ENCODE measurements at regions of chr2 and their contacts with region 1.

Region 1: GRCh38 chr2:106065268-106065982 is 128.7 kb downstream of the UXS1 start:
- DNase-seq: no peak
- H3K4me3 ChIP-seq: peak overlapping the region; percentile 37 to 58 (median 51)
- H3K27ac ChIP-seq: peak overlapping the region in 3 of 4 donors; percentile 20 to 71 (median 57)
- H3K4me1 ChIP-seq: peaks cover 0 to 24% (median 23%) of the 10 kb centered on the region in 4 donors
- H3K27me3 ChIP-seq: no peaks in the 10 kb centered on the region
- CTCF ChIP-seq: no peak
- EP300 ChIP-seq: no peak
- POLR2A ChIP-seq: no peak

Region 2: DNA sequence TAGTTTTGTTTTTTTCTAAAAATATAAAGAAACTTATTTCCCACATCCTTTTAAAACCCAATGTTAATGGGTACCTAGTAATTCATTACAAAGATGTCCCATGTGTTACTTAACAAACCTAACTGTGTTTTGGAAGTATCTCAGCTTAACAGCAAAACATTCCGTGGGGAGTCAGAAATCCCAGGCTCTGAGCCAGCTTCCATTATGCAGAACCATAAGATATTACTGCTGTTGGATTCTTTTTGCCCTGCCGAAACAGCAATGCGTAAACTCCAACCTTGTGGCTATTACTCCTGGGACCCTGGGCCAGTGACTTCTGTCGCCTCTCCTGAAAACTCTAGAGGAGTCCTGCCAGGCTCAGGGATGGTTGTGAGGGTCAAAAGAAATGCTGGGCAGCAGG is 45.4 kb before region 1 on chr2:
- intact Hi-C with region 1: no loop called
- DNase-seq: no peak
- H3K4me3 ChIP-seq: no peak overlapping the region
- H3K27ac ChIP-seq: peak overlapping the region in 3 of 4 donors; percentile 62 to 78 (median 66)
- H3K4me1 ChIP-seq: peaks cover 0 to 27% (median 24%) of the 10 kb centered on the region in 4 donors
- H3K27me3 ChIP-seq: no peaks in the 10 kb centered on the region
- CTCF ChIP-seq: no peak
- EP300 ChIP-seq: no peak
- POLR2A ChIP-seq: no peak

Region 3: GRCh38 chr2:106030287-106031268 is 34.8 kb before region 1 on chr2:
- intact Hi-C with region 1: loop called (anchors 5 kb)
- DNase-seq: peak; percentile 86
- H3K4me3 ChIP-seq: peak overlapping the region in 1 of 4 donors; percentile 24
- H3K27ac ChIP-seq: peak overlapping the region; percentile 84 to 93 (median 92)
- H3K4me1 ChIP-seq: peaks cover 0 to 36% (median 25%) of the 10 kb centered on the region in 4 donors
- H3K27me3 ChIP-seq: no peaks in the 10 kb centered on the region
- CTCF ChIP-seq: no peak
- EP300 ChIP-seq: peak in 3 of 4 donors; percentile 33 to 66 (median 53)
- POLR2A ChIP-seq: no peak

Region 4: DNA sequence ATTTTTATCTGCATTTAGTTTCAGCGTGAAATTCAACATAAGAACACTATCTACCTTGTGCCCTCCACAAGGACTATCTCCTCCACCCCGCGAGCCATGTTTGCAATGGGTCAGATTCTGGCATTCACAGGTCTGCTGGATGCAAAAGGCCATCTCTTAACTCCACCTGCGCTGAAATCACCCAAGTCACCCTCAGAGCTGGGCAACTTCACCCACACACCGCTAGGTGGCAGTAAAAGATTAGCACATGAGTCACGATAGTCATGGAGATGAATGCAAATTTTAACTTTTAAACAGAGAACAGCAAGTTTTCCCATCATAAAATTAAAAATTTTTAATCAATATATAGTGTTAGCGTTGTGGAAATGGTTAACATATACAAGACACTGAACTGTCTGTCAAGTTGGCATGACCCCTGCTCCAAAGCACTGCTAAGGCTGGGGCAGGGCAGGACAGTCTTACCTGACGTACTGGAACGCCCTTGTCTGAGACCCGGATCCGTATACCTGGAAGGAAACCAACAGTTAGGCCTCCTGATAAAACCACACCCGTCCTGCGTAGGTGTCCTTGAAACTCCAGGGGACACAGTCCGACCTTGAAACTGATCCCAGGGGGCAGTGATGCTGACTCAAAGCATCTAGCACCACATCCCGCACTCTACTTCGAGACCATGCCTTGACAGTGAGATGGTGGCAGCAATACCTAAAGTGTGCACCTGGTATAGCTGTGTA is 39.1 kb after region 1 on chr2:
- intact Hi-C with region 1: no loop called
- DNase-seq: no peak
- H3K4me3 ChIP-seq: no peak overlapping the region
- H3K27ac ChIP-seq: no peak overlapping the region
- H3K4me1 ChIP-seq: peaks cover 0 to 25% (median 8%) of the 10 kb centered on the region in 4 donors
- H3K27me3 ChIP-seq: no peaks in the 10 kb centered on the region
- CTCF ChIP-seq: peak; percentile 86 to 95 (median 92)
- EP300 ChIP-seq: no peak
- POLR2A ChIP-seq: no peak

Measured in sigmoid colon (tissue), 7 donors.